ENCODE measurements at regions of chr1 and their contacts with region 1.

Region 1: DNA sequence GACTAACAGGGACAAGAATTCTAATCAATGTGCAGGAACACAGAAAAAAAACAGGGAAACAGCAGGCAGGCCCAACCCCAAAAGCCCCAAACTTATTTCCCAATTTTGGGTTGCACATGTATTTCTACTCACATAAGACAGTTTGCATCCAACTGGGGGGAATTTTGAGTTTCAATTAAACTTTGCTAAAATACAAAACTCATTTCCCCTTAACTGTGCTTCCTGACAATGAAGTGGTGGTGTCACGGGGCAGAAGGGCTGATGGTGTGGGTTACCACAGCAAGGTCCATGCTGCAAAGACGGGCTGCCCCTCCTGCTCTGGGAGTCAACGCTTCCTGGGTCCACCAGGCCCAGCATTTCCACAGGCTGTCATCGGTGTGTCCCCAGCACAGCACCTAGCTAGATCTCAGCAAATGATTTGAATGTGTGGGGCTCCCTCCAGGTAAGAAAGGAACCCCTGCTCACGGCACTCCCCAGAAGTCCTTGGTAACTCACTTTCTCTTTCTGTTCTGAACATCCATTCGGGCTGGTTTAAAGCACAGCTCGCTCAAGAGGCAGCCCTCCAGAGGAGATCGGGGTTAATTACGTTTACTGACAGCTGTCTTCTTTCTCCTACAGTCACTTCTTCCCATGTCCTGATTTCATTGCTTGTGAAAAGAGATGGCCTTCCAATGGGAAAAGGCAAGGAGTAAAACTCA is 27.4 kb downstream of the HIVEP3 start:
- DNase-seq: peak; percentile 68
- ATAC-seq: peak; percentile 98
- H3K4me3 ChIP-seq: peak overlapping the region; percentile 66
- H3K27ac ChIP-seq: peak overlapping the region; percentile 75
- H3K4me1 ChIP-seq: peaks cover 15% of the 10 kb centered on the region
- H3K27me3 ChIP-seq: no peaks in the 10 kb centered on the region
- CTCF ChIP-seq: peak; percentile 39 to 42 (median 41); a peak in 5 of 6 replicates
- EP300 ChIP-seq: peak; percentile 4 to 26; a peak in 1 of 4 replicates
- POLR2A ChIP-seq: peak; percentile 73
- RAD21 ChIP-seq: peak; percentile 72

Region 2: GRCh38 chr1:41558761-41559171 is 332.6 kb before region 1 on chr1:
- CTCF ChIA-PET with region 1: no interaction called
- POLR2A ChIA-PET with region 1: no interaction called
- RAD21 ChIA-PET with region 1: no interaction called
- SMC1A ChIA-PET with region 1: no interaction called
- in situ Hi-C with region 1: no loop called
- intact Hi-C with region 1: no loop called
- DNase-seq: no peak
- ATAC-seq: no peak
- H3K4me3 ChIP-seq: no peak overlapping the region
- H3K27ac ChIP-seq: no peak overlapping the region
- H3K4me1 ChIP-seq: no peaks in the 10 kb centered on the region
- H3K27me3 ChIP-seq: no peaks in the 10 kb centered on the region
- CTCF ChIP-seq: no peak
- EP300 ChIP-seq: no peak
- POLR2A ChIP-seq: no peak
- RAD21 ChIP-seq: no peak

Region 3: GRCh38 chr1:41773144-41773591 is 118.2 kb before region 1 on chr1:
- CTCF ChIA-PET with region 1: no interaction called
- POLR2A ChIA-PET with region 1: no interaction called
- RAD21 ChIA-PET with region 1: no interaction called
- SMC1A ChIA-PET with region 1: no interaction called
- in situ Hi-C with region 1: no loop called
- intact Hi-C with region 1: no loop called
- DNase-seq: no peak
- ATAC-seq: no peak
- H3K4me3 ChIP-seq: no peak overlapping the region
- H3K27ac ChIP-seq: no peak overlapping the region
- H3K4me1 ChIP-seq: peaks cover 8% of the 10 kb centered on the region
- H3K27me3 ChIP-seq: no peaks in the 10 kb centered on the region
- CTCF ChIP-seq: no peak
- EP300 ChIP-seq: no peak
- POLR2A ChIP-seq: no peak
- RAD21 ChIP-seq: no peak

Region 4: GRCh38 chr1:41907446-41907845 is 16.1 kb after region 1 on chr1:
- CTCF ChIA-PET with region 1: interaction called, 7 read pairs
- POLR2A ChIA-PET with region 1: interaction called, 3 read pairs
- RAD21 ChIA-PET with region 1: interaction called, 3 read pairs
- SMC1A ChIA-PET with region 1: interaction called, 16 read pairs
- in situ Hi-C with region 1: no loop called
- intact Hi-C with region 1: no loop called
- DNase-seq: no peak
- ATAC-seq: no peak
- H3K4me3 ChIP-seq: no peak overlapping the region
- H3K27ac ChIP-seq: no peak overlapping the region
- H3K4me1 ChIP-seq: peaks cover 17% of the 10 kb centered on the region
- H3K27me3 ChIP-seq: no peaks in the 10 kb centered on the region
- CTCF ChIP-seq: no peak
- EP300 ChIP-seq: no peak
- POLR2A ChIP-seq: no peak
- RAD21 ChIP-seq: no peak

Region 5: GRCh38 chr1:41963636-41964035 is 72.3 kb after region 1 on chr1:
- CTCF ChIA-PET with region 1: no interaction called
- POLR2A ChIA-PET with region 1: no interaction called
- RAD21 ChIA-PET with region 1: interaction called, 4 read pairs
- SMC1A ChIA-PET with region 1: interaction called, 12 read pairs
- in situ Hi-C with region 1: no loop called
- intact Hi-C with region 1: no loop called
- DNase-seq: no peak
- ATAC-seq: no peak
- H3K4me3 ChIP-seq: no peak overlapping the region
- H3K27ac ChIP-seq: no peak overlapping the region
- H3K4me1 ChIP-seq: peaks cover 11% of the 10 kb centered on the region
- H3K27me3 ChIP-seq: no peaks in the 10 kb centered on the region
- CTCF ChIP-seq: no peak
- EP300 ChIP-seq: no peak
- POLR2A ChIP-seq: no peak
- RAD21 ChIP-seq: no peak

Region 6: GRCh38 chr1:42035830-42036604 is 144.7 kb after region 1 on chr1:
- CTCF ChIA-PET with region 1: interaction called, 3 read pairs
- POLR2A ChIA-PET with region 1: no interaction called
- RAD21 ChIA-PET with region 1: interaction called, 11 read pairs
- SMC1A ChIA-PET with region 1: interaction called, 10 read pairs
- in situ Hi-C with region 1: no loop called
- intact Hi-C with region 1: no loop called
- DNase-seq: peak; percentile 55
- ATAC-seq: peak; percentile 90
- H3K4me3 ChIP-seq: peak overlapping the region; percentile 93
- H3K27ac ChIP-seq: peak overlapping the region; percentile 37; the same call in 1 of the 2 replicates
- H3K4me1 ChIP-seq: peaks cover 8% of the 10 kb centered on the region; the same call in 1 of the 2 replicates
- H3K27me3 ChIP-seq: no peaks in the 10 kb centered on the region; a peak in 1 of 4 replicates
- CTCF ChIP-seq: no peak
- EP300 ChIP-seq: no peak
- POLR2A ChIP-seq: peak; percentile 63; the same call in 1 of the 2 replicates
- RAD21 ChIP-seq: no peak

Measured in GM12878 (cell line).